Endothelial cell of umbilical vein (primary cell): ENCODE measurements at regions of chr7 and their contacts with region 1.

Region 1: DNA sequence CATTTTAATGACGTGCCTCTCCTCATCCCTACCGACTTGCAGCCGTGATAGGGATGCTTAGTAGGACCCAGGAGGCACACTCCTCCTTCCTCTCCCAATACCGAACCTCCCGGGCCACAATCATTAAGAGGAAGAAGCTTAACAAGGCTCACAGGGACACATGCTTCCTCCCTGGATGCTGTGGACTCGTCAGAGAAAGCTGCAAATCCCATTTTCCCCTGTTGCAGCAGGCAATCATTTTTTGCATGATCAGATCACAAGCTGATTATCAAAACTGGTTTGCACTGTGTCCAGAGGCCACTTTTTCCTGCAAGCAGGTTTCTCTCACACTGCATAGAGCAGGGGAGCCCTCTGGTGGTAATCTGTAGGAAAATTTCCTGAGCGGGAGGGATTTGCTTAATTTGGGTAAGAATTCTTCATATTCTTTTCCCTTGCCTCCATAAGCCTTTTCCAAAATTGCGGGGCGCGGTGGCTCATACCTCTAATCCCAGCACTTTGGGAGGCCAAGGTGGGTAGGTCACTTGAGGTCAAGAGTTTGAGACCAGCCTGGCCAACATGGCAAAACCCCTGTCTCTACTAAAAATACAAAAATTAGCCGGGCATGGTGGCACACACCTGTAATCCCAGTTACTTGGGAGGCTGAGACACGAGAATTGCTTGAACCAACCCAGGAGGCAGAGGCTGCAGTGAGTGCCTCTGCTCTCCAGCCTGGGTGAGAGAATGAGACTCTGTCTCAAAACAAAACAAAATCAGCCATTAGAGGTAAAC is 16.1 kb upstream of the LAMB4 start:
- DNase-seq: peak; percentile 80
- H3K4me3 ChIP-seq: no peak overlapping the region
- H3K27ac ChIP-seq: no peak overlapping the region
- H3K4me1 ChIP-seq: no peaks in the 10 kb centered on the region
- H3K27me3 ChIP-seq: no peaks in the 10 kb centered on the region
- CTCF ChIP-seq: peak; percentile 69 to 79
- POLR2A ChIP-seq: no peak

Region 2: GRCh38 chr7:107902381-107902780 is 243.9 kb before region 1 on chr7:
- CTCF ChIA-PET with region 1: no interaction called
- POLR2A ChIA-PET with region 1: no interaction called
- dilution Hi-C with region 1: no loop called
- intact Hi-C with region 1: no loop called
- DNase-seq: peak; percentile 50
- H3K4me3 ChIP-seq: no peak overlapping the region
- H3K27ac ChIP-seq: no peak overlapping the region
- H3K4me1 ChIP-seq: no peaks in the 10 kb centered on the region
- H3K27me3 ChIP-seq: no peaks in the 10 kb centered on the region
- CTCF ChIP-seq: no peak
- POLR2A ChIP-seq: no peak

Region 3: GRCh38 chr7:107939573-107940489 is 206.4 kb before region 1 on chr7:
- CTCF ChIA-PET with region 1: interaction called, 10 read pairs
- POLR2A ChIA-PET with region 1: no interaction called
- dilution Hi-C with region 1: no loop called
- intact Hi-C with region 1: loop called (anchors 2 kb)
- DNase-seq: peak; percentile 98
- H3K4me3 ChIP-seq: no peak overlapping the region
- H3K27ac ChIP-seq: peak overlapping the region; percentile 91
- H3K4me1 ChIP-seq: peaks cover 62% of the 10 kb centered on the region
- H3K27me3 ChIP-seq: no peaks in the 10 kb centered on the region
- CTCF ChIP-seq: no peak
- POLR2A ChIP-seq: peak; percentile 56

Region 4: DNA sequence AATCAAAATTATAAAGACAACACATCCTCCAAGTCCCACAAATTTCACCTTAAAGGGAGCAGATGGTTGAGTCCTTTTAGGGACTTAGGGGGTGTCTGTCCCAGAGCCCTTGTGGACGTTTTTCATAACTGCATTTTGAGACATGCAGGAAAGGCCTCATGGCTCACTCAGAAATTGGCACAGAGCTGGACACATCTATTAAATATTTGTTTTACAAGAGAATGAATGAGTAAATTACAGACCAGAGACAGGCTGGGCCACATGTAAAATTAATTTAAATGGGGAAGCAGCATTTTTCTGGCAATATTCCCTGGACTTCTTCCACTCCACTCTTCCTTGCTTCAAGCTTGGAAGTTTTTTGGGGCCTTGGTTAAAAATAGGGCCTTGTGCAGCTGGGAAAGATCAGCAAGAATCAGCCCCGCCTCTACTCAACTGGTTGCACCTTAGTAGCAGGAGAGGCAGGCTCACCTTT is 163.3 kb before region 1 on chr7:
- CTCF ChIA-PET with region 1: interaction called, 29 read pairs
- POLR2A ChIA-PET with region 1: no interaction called
- dilution Hi-C with region 1: no loop called
- intact Hi-C with region 1: no loop called
- DNase-seq: no peak
- H3K4me3 ChIP-seq: no peak overlapping the region
- H3K27ac ChIP-seq: no peak overlapping the region
- H3K4me1 ChIP-seq: no peaks in the 10 kb centered on the region
- H3K27me3 ChIP-seq: no peaks in the 10 kb centered on the region
- CTCF ChIP-seq: peak; percentile 25
- POLR2A ChIP-seq: no peak

Region 5: DNA sequence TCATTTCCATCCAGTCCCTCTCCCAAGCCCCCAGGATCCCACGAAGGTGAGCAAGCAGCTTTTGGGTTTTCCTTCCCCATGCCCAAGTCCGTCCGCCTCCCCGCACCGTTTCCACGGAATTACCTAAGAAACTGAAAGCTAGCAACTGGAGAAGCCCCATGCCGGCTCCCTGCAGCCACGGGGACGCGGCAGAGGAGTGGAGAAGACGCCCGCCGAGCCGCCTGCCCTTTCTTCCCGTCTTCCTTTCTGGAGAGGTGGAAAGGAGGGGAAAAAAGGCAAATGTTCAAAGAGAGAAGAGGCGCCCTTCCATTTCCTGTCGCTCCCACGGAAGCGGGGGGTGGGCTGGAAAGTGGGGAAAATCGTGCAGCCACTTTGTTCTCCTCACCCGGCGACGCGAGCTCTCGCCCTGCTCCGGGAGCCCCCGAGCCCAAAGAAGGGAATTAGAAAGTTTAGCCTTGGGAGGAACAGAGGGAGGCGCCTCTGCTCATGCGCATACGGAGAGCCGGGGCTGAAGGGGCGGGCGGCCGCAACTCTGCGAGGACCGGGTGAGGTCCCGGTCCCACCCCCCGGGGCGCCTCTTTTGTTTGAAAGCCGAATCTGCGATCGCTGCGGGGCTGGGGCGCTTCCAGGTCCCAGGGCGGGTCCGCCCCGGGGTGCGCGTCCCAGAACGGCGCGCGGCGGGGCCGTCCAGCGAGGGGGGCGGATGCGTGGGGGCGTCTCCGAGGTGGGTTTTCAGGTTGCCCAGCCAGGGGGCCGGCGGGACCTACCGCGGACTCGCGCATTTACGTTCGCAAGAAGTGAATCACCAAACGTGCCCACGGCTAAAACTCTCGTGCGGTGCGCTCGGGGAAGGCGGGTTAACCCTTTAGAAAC is 143.3 kb before region 1 on chr7 and contains the start of gene LAMB1:
- CTCF ChIA-PET with region 1: interaction called, 47 read pairs
- POLR2A ChIA-PET with region 1: no interaction called
- dilution Hi-C with region 1: loop called (anchors 5 kb)
- intact Hi-C with region 1: loop called (anchors 1 kb)
- DNase-seq: peak; percentile 83
- H3K4me3 ChIP-seq: peak within 1 kb of the TSS; percentile 84 to 95 (median 90)
- H3K27ac ChIP-seq: peak within 1 kb of the TSS; percentile 99
- H3K4me1 ChIP-seq: peaks cover 45% of the 10 kb centered on the region
- H3K27me3 ChIP-seq: no peaks in the 10 kb centered on the region
- CTCF ChIP-seq: no peak
- POLR2A ChIP-seq: peak; percentile 97
- total RNA-seq, gene LAMB1: 703 and 734 TPM in 2 replicates

Region 6: GRCh38 chr7:108094933-108095710 is 51.1 kb before region 1 on chr7:
- CTCF ChIA-PET with region 1: interaction called, 10 read pairs
- POLR2A ChIA-PET with region 1: no interaction called
- dilution Hi-C with region 1: no loop called
- intact Hi-C with region 1: no loop called
- DNase-seq: peak; percentile 86
- H3K4me3 ChIP-seq: no peak overlapping the region
- H3K27ac ChIP-seq: peak overlapping the region; percentile 58
- H3K4me1 ChIP-seq: peaks cover 29% of the 10 kb centered on the region
- H3K27me3 ChIP-seq: no peaks in the 10 kb centered on the region
- CTCF ChIP-seq: no peak
- POLR2A ChIP-seq: no peak

Region 7: GRCh38 chr7:108497082-108497725 is 350.9 kb after region 1 on chr7:
- CTCF ChIA-PET with region 1: interaction called, 18 read pairs
- POLR2A ChIA-PET with region 1: no interaction called
- dilution Hi-C with region 1: no loop called
- intact Hi-C with region 1: no loop called
- DNase-seq: peak; percentile 73
- H3K4me3 ChIP-seq: no peak overlapping the region
- H3K27ac ChIP-seq: no peak overlapping the region
- H3K4me1 ChIP-seq: peaks cover 8% of the 10 kb centered on the region
- H3K27me3 ChIP-seq: no peaks in the 10 kb centered on the region
- CTCF ChIP-seq: peak; percentile 43 to 61
- POLR2A ChIP-seq: no peak